ENCODE measurements at regions of chr5 and their contacts with region 1.

Region 1: GRCh38 chr5:98796197-98796972 is 22.9 kb downstream of the RGMB start:
- DNase-seq: no peak
- ATAC-seq: peak; percentile 90
- H3K4me3 ChIP-seq: no peak overlapping the region
- H3K27ac ChIP-seq: no peak overlapping the region
- H3K4me1 ChIP-seq: no peaks in the 10 kb centered on the region
- H3K27me3 ChIP-seq: no peaks in the 10 kb centered on the region
- CTCF ChIP-seq: peak; percentile 70 to 80 (median 75)
- EP300 ChIP-seq: no peak
- POLR2A ChIP-seq: no peak
- RAD21 ChIP-seq: peak; percentile 89

Region 2: DNA sequence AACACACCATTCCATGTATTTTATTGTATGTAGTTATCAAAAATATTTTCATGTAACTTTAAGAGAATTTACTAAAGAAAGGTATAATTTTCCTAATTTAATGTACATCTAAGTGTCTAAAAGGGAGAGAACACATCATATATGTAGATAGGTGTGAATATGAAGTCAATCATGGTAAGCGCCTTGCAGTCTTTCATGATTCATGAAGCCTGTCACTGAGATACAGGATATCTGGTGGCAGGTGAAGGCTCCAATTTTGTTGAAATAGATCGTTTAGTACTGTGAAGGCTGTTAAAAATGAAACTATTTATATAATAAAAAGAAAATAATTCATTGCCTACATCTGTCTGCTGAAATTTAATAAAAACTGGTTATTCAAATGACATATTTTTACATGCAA is 38.4 kb before region 1 on chr5:
- CTCF ChIA-PET with region 1: no interaction called
- POLR2A ChIA-PET with region 1: no interaction called
- RAD21 ChIA-PET with region 1: no interaction called
- SMC1A ChIA-PET with region 1: no interaction called
- in situ Hi-C with region 1: no loop called
- intact Hi-C with region 1: no loop called
- DNase-seq: no peak
- ATAC-seq: no peak
- H3K4me3 ChIP-seq: no peak overlapping the region
- H3K27ac ChIP-seq: no peak overlapping the region
- H3K4me1 ChIP-seq: no peaks in the 10 kb centered on the region
- H3K27me3 ChIP-seq: peaks cover 0 to 2% of the 10 kb centered on the region in 2 experiments; a peak in 1 of 4 replicates
- CTCF ChIP-seq: no peak
- EP300 ChIP-seq: no peak
- POLR2A ChIP-seq: no peak
- RAD21 ChIP-seq: no peak

Region 3: GRCh38 chr5:98780390-98780789 is 16.0 kb before region 1 on chr5:
- CTCF ChIA-PET with region 1: interaction called, 20 read pairs
- POLR2A ChIA-PET with region 1: no interaction called
- RAD21 ChIA-PET with region 1: interaction called, 4 read pairs
- SMC1A ChIA-PET with region 1: interaction called, 11 read pairs
- in situ Hi-C with region 1: no loop called
- intact Hi-C with region 1: no loop called
- DNase-seq: no peak
- ATAC-seq: peak; percentile 30
- H3K4me3 ChIP-seq: peak overlapping the region; percentile 21; the same call in 1 of the 2 replicates
- H3K27ac ChIP-seq: no peak overlapping the region
- H3K4me1 ChIP-seq: peaks cover 6% of the 10 kb centered on the region
- H3K27me3 ChIP-seq: no peaks in the 10 kb centered on the region
- CTCF ChIP-seq: no peak
- EP300 ChIP-seq: no peak
- POLR2A ChIP-seq: no peak
- RAD21 ChIP-seq: no peak

Region 4: GRCh38 chr5:98786191-98786853 is 10.1 kb before region 1 on chr5:
- CTCF ChIA-PET with region 1: interaction called, 9 read pairs
- POLR2A ChIA-PET with region 1: no interaction called
- RAD21 ChIA-PET with region 1: interaction called, 3 read pairs
- SMC1A ChIA-PET with region 1: interaction called, 10 read pairs
- in situ Hi-C with region 1: no loop called
- intact Hi-C with region 1: no loop called
- DNase-seq: no peak
- ATAC-seq: no peak
- H3K4me3 ChIP-seq: no peak overlapping the region
- H3K27ac ChIP-seq: no peak overlapping the region
- H3K4me1 ChIP-seq: no peaks in the 10 kb centered on the region
- H3K27me3 ChIP-seq: no peaks in the 10 kb centered on the region
- CTCF ChIP-seq: no peak
- EP300 ChIP-seq: no peak
- POLR2A ChIP-seq: no peak
- RAD21 ChIP-seq: no peak

Region 5: GRCh38 chr5:98810206-98810605 is 13.8 kb after region 1 on chr5:
- CTCF ChIA-PET with region 1: interaction called, 10 read pairs
- POLR2A ChIA-PET with region 1: no interaction called
- RAD21 ChIA-PET with region 1: no interaction called
- SMC1A ChIA-PET with region 1: interaction called, 5 read pairs
- in situ Hi-C with region 1: no loop called
- intact Hi-C with region 1: no loop called
- DNase-seq: no peak
- ATAC-seq: no peak
- H3K4me3 ChIP-seq: no peak overlapping the region
- H3K27ac ChIP-seq: no peak overlapping the region
- H3K4me1 ChIP-seq: no peaks in the 10 kb centered on the region
- H3K27me3 ChIP-seq: no peaks in the 10 kb centered on the region
- CTCF ChIP-seq: no peak
- EP300 ChIP-seq: no peak
- POLR2A ChIP-seq: no peak
- RAD21 ChIP-seq: no peak

Measured in GM12878 (cell line).